HepG2 (cell line): ENCODE measurements at regions of chr4 and their contacts with region 1.

Region 1: DNA sequence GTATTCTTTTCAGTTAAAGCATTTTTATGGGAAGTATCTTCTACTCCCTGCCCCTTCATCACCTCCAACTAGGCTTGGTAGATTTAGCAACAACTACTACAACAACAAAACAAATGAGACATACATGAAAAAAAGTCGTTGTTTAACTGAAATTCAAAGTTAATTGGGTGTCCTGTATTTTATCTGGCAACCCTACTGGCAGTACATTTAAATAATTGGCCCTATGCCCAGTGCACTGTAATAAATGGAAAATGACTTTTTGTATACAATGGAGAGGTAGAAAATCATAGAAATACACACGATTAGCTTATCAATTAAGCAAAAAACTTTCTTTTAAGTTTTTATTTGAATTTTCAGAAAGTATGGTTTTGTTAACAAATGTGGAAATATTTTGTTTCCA is 21.4 kb upstream of the CLGN start:
- DNase-seq: no peak
- ATAC-seq: no peak
- H3K4me3 ChIP-seq: no peak overlapping the region
- H3K27ac ChIP-seq: no peak overlapping the region
- H3K4me1 ChIP-seq: no peaks in the 10 kb centered on the region
- H3K27me3 ChIP-seq: 0 out of 5 replicates have a peak, but pooled peaks cover 0 to 2% of the 10 kb centered on the region in 2 experiments
- CTCF ChIP-seq: no peak
- EP300 ChIP-seq: no peak
- POLR2A ChIP-seq: no peak
- RAD21 ChIP-seq: no peak

Region 2: GRCh38 chr4:141169391-141169790 is 720.6 kb after region 1 on chr4:
- CTCF ChIA-PET with region 1: no interaction called
- POLR2A ChIA-PET with region 1: no interaction called
- in situ Hi-C with region 1: no loop called
- intact Hi-C with region 1: no loop called
- DNase-seq: no peak
- ATAC-seq: no peak
- H3K4me3 ChIP-seq: no peak overlapping the region
- H3K27ac ChIP-seq: no peak overlapping the region
- H3K4me1 ChIP-seq: no peaks in the 10 kb centered on the region
- H3K27me3 ChIP-seq: no peaks in the 10 kb centered on the region
- CTCF ChIP-seq: no peak
- EP300 ChIP-seq: no peak
- POLR2A ChIP-seq: no peak
- RAD21 ChIP-seq: no peak

Region 3: GRCh38 chr4:141432000-141432712 is 983.3 kb after region 1 on chr4:
- CTCF ChIA-PET with region 1: no interaction called
- POLR2A ChIA-PET with region 1: no interaction called
- in situ Hi-C with region 1: no loop called
- intact Hi-C with region 1: loop called (anchors 10 kb)
- DNase-seq: no peak
- ATAC-seq: no peak
- H3K4me3 ChIP-seq: no peak overlapping the region
- H3K27ac ChIP-seq: no peak overlapping the region
- H3K4me1 ChIP-seq: no peaks in the 10 kb centered on the region
- H3K27me3 ChIP-seq: no peaks in the 10 kb centered on the region; a peak in 1 of 5 replicates
- CTCF ChIP-seq: no peak
- EP300 ChIP-seq: no peak
- POLR2A ChIP-seq: no peak
- RAD21 ChIP-seq: no peak